Caco-2 (cell line): ENCODE measurements at regions of chr1 and their contacts with region 1.

Region 1: DNA sequence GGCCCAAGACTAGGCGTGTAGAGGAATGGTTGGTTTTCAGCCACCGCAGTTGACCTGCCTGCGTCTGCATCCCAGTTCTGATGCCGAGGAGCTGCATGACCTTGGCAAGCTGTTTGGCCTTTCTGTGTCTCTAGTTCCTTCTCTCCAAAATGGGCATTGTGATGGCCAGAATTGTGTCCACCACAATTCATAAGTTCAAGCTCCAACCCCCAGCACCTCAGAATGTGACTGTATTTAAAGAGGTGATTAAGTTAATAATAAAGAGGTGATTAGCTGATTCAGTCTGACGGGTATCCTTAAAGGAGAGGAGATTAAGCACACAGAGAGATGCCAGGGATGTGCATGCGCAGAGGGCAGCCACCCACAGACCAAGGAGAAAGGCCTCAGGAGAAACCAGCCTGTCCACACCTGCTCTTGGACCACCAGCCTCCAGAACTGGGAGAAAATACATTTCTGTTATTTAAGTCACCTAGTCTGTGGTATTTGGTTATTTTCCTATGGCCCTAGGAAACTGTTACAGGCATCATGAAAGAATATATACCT is 28.5 kb downstream of the MAB21L3 start:
- DNase-seq: no peak
- H3K4me3 ChIP-seq: no peak overlapping the region
- H3K4me3 Mint-ChIP-seq: no peak overlapping the region
- H3K27ac Mint-ChIP-seq: no peak overlapping the region
- H3K4me1 ChIP-seq: no peaks in the 10 kb centered on the region
- H3K4me1 Mint-ChIP-seq: peaks cover 2% of the 10 kb centered on the region
- H3K27me3 ChIP-seq: no peaks in the 10 kb centered on the region
- H3K27me3 Mint-ChIP-seq: no peaks in the 10 kb centered on the region
- CTCF ChIP-seq: no peak

Region 2: DNA sequence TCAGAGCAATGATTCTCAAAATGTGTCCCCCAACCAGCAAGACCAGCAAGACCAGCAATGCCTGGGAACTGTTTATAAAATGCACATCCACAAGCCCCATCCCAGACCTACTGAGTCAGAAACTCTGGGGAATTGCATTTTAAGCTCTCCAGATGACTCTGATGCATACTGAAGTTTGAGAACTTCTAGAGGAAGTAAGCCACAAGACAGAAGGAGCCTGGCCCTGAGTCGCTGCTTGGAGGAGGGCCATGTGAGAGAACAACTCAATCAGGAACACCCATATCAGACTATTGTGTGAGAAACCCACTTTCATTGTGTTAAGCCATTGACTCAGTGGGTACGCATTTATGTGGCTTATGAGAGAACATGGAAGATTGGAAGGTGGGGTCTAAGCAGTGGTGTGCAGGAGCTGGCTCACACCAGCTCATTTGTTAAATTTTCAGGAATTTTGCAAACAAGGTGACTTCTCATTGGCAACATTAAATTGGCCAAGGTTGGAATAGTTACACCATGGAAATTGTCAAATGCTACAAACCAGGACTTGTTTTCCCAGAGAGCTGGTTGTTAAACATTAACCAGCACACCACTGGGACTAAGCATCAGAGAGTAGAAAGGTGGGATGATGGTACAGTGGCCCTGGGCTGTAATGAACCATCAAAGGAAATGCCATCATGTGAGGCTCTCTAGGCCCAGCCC is 272.3 kb after region 1 on chr1:
- CTCF ChIA-PET with region 1: interaction called, 12 read pairs
- POLR2A ChIA-PET with region 1: no interaction called
- intact Hi-C with region 1: loop called (anchors 5 kb)
- DNase-seq: peak; percentile 60 to 67
- H3K4me3 ChIP-seq: no peak overlapping the region
- H3K4me3 Mint-ChIP-seq: no peak overlapping the region
- H3K27ac Mint-ChIP-seq: no peak overlapping the region
- H3K4me1 ChIP-seq: peaks cover 16% of the 10 kb centered on the region
- H3K4me1 Mint-ChIP-seq: no peaks in the 10 kb centered on the region
- H3K27me3 ChIP-seq: no peaks in the 10 kb centered on the region
- H3K27me3 Mint-ChIP-seq: no peaks in the 10 kb centered on the region
- CTCF ChIP-seq: no peak

Region 3: DNA sequence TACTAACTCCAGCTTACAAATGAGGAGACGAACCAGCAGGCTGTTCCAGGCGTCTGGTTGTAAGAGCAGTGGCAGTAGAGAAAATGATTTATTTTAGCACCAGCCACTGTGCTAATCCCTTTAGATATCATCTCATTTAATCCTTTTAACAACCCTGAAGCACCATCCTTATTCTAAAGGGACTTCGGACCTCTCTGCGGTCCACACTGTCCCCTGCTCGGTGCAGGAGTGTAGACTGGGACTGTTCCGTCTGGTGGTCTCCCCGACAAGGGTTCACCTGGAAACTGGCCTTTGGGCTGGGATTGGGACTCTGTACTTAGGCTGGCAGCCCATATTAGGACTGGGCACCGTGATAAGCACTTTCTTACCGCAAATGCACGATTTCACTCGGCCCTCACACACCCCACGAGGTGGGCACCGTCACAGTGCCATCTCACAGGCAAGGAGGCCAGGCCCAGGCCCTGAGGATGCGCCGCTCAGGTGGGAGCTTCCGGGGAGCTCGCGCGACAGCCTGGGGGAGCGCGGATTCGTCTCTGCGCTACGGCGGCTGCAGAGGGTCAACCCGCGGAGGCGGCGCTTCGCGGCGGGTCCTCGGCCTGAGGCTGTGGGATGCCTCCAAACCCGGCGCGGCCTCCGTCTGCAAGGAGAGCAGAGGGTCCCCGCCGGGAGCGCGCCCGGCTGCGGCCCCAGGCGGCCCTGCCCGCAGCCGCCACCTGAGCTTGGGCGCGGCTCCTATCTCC is 278.6 kb after region 1 on chr1:
- CTCF ChIA-PET with region 1: interaction called, 12 read pairs
- POLR2A ChIA-PET with region 1: no interaction called
- intact Hi-C with region 1: loop called (anchors 5 kb)
- DNase-seq: peak; percentile 83 to 85
- H3K4me3 ChIP-seq: peak overlapping the region; percentile 48
- H3K4me3 Mint-ChIP-seq: peak overlapping the region; percentile 75
- H3K27ac Mint-ChIP-seq: peak overlapping the region; percentile 64
- H3K4me1 ChIP-seq: peaks cover 5% of the 10 kb centered on the region; the same call in 1 of the 2 replicates
- H3K4me1 Mint-ChIP-seq: no peaks in the 10 kb centered on the region
- H3K27me3 ChIP-seq: no peaks in the 10 kb centered on the region
- H3K27me3 Mint-ChIP-seq: no peaks in the 10 kb centered on the region
- CTCF ChIP-seq: no peak

Region 4: GRCh38 chr1:116498789-116499628 is 359.3 kb after region 1 on chr1:
- CTCF ChIA-PET with region 1: interaction called, 70 read pairs
- POLR2A ChIA-PET with region 1: no interaction called
- intact Hi-C with region 1: loop called (anchors 1 kb)
- DNase-seq: peak; percentile 63 to 73
- H3K4me3 ChIP-seq: no peak overlapping the region
- H3K4me3 Mint-ChIP-seq: no peak overlapping the region
- H3K27ac Mint-ChIP-seq: no peak overlapping the region
- H3K4me1 ChIP-seq: peaks cover 17% of the 10 kb centered on the region
- H3K4me1 Mint-ChIP-seq: peaks cover 20% of the 10 kb centered on the region
- H3K27me3 ChIP-seq: no peaks in the 10 kb centered on the region
- H3K27me3 Mint-ChIP-seq: no peaks in the 10 kb centered on the region
- CTCF ChIP-seq: peak; percentile 65 to 69